ENCODE measurements at regions of chr14 and their contacts with region 1.

Region 1: DNA sequence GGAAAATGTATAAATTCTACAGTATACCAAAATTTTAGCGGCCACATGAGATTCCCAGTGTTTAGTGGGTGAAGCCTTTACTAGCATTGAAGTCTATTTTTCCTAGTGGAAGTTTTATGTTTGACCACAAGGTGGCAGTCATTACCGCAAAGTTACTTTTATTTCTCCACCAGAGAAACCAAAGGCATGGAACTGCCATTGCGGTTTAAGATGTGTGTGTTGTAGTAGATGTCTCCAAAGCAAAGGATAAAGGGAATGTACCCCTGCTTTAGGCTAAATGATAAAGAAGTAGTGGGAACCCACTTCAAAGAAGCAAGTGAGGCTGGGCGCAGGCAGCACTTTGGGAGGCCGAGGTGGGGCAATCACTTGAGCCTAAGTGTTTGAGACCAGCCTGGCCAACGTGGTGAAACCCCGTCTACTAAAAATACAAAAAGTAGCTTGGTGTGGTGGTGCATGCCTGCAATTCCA is 140.5 kb downstream of the PRKCH start:
- DNase-seq: no peak
- ATAC-seq: peak; percentile 66 to 78
- H3K4me3 ChIP-seq: no peak overlapping the region
- H3K27ac ChIP-seq: no peak overlapping the region
- H3K4me1 ChIP-seq: peaks cover 0 to 2% of the 10 kb centered on the region in 2 donors
- H3K27me3 ChIP-seq: no peaks in the 10 kb centered on the region
- CTCF ChIP-seq: peak; percentile 72 to 82 (median 76)
- POLR2A ChIP-seq: no peak

Region 2: GRCh38 chr14:61296719-61297502 is 164.9 kb before region 1 on chr14:
- in situ Hi-C with region 1: loop called in 2 of 4 experiments (anchors 10 kb)
- intact Hi-C with region 1: loop called (anchors 2 kb)
- DNase-seq: no peak
- ATAC-seq: peak; percentile 62
- H3K4me3 ChIP-seq: no peak overlapping the region
- H3K27ac ChIP-seq: no peak overlapping the region
- H3K4me1 ChIP-seq: peaks cover 11 to 13% of the 10 kb centered on the region in 2 donors
- H3K27me3 ChIP-seq: no peaks in the 10 kb centered on the region
- CTCF ChIP-seq: peak; percentile 23 to 67 (median 55)
- POLR2A ChIP-seq: no peak

Region 3: DNA sequence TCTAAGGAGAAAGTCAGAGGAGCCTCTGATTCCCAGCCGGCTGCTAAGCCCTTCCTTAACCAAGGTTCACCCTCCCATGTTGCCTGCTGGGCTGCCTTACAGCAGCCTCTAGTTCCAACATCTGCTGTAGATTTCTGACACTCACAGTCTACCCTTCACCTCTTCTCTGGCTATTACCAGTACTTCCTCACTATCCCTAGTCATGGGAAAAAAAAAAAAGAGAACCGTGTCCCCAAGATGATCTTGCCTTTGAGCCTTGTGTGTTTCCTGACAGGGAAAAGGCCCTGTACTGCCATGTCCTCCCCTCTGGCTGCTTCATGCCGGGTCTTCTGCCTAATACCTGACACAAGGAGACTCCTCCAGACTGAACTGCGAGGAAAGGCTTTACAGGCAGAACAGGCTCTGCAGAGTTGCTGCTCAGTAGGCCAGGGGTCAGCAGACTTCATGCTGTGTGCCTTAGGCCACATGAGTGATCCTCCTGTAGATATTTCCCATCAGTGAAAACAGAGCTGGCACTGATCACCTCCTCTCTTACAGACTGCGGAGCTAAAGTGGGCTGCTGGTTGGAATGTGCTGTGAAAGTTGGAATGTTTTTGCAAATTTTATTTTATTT is 93.6 kb before region 1 on chr14:
- in situ Hi-C with region 1: no loop called
- intact Hi-C with region 1: no loop called
- DNase-seq: no peak
- ATAC-seq: no peak
- H3K4me3 ChIP-seq: no peak overlapping the region
- H3K27ac ChIP-seq: peak overlapping the region in 1 of 4 donors; percentile 2
- H3K4me1 ChIP-seq: peaks cover 18 to 20% of the 10 kb centered on the region in 2 donors
- H3K27me3 ChIP-seq: no peaks in the 10 kb centered on the region
- CTCF ChIP-seq: no peak
- POLR2A ChIP-seq: no peak

Region 4: GRCh38 chr14:61508526-61508925 is 46.7 kb after region 1 on chr14:
- in situ Hi-C with region 1: no loop called
- intact Hi-C with region 1: loop called (anchors 1 kb)
- DNase-seq: no peak
- ATAC-seq: no peak
- H3K4me3 ChIP-seq: no peak overlapping the region
- H3K27ac ChIP-seq: no peak overlapping the region
- H3K4me1 ChIP-seq: peaks cover 0 to 5% of the 10 kb centered on the region in 2 donors
- H3K27me3 ChIP-seq: no peaks in the 10 kb centered on the region
- CTCF ChIP-seq: no peak
- POLR2A ChIP-seq: no peak

Region 5: DNA sequence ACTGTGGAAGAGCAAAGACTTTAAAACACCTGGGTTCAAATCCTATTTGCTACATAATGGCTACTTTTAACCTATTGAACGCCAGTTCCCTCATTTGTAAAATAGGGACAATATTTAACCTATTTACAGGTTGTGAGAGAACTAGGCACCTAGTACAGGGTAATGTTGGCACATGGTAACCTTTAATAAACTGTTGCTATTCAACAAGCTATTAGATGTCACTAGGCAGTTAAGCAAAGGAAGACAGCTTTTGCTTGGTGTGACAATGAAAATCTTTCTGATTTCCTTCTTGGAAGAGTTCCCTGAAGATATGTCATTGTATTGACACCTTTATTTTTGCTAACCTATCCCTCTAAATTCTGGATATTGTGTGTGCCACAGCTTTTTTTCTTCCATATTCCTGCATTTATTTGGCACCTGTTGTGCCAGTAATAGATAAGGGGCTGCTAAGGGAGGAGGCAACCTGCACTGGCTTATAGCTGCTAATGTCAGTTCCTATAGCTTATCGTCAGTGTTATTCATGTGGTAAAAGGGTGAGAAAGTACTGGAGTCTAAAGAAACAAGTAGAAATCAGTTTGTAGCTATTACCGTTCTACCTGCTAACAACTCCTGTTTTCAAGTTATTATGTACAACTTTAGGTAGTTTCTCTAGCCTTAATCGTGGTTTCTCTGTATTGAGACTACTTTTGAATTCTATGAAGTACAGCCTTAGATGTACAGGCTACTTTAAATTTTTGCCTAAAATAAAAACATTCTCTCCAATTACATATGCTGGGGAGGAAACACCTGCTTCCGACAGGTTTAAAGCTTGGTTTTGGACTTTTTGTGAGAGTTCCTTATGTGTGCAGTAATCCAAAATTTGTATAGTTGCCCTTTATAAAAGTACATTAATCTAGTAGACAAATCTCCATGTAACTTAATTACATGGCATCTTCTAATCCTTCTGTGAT is 257.8 kb after region 1 on chr14:
- in situ Hi-C with region 1: loop called in 1 of 4 experiments (anchors 10 kb)
- intact Hi-C with region 1: no loop called
- DNase-seq: no peak
- ATAC-seq: peak; percentile 23 to 49
- H3K4me3 ChIP-seq: no peak overlapping the region
- H3K27ac ChIP-seq: no peak overlapping the region
- H3K4me1 ChIP-seq: peaks cover 16 to 35% of the 10 kb centered on the region in 2 donors
- H3K27me3 ChIP-seq: no peaks in the 10 kb centered on the region
- CTCF ChIP-seq: no peak
- POLR2A ChIP-seq: no peak

Region 6: GRCh38 chr14:61730756-61731373 is 269.0 kb after region 1 on chr14:
- in situ Hi-C with region 1: loop called in 3 of 4 experiments (anchors 10 to 25 kb)
- intact Hi-C with region 1: loop called (anchors 2 kb)
- DNase-seq: no peak
- ATAC-seq: no peak
- H3K4me3 ChIP-seq: no peak overlapping the region
- H3K27ac ChIP-seq: no peak overlapping the region
- H3K4me1 ChIP-seq: no peaks in the 10 kb centered on the region
- H3K27me3 ChIP-seq: no peaks in the 10 kb centered on the region
- CTCF ChIP-seq: peak in 4 of 5 experiments; percentile 20 to 49 (median 40)
- POLR2A ChIP-seq: no peak

Region 7: GRCh38 chr14:61837336-61838229 is 375.7 kb after region 1 on chr14:
- in situ Hi-C with region 1: loop called (anchors 5 to 10 kb)
- intact Hi-C with region 1: loop called (anchors 1 kb)
- DNase-seq: peak; percentile 48 to 56
- ATAC-seq: peak; percentile 81 to 97
- H3K4me3 ChIP-seq: no peak overlapping the region
- H3K27ac ChIP-seq: no peak overlapping the region
- H3K4me1 ChIP-seq: no peaks in the 10 kb centered on the region
- H3K27me3 ChIP-seq: no peaks in the 10 kb centered on the region
- CTCF ChIP-seq: peak; percentile 78 to 94 (median 86)
- POLR2A ChIP-seq: no peak

Region 8: GRCh38 chr14:62126879-62127478 is 665.1 kb after region 1 on chr14:
- in situ Hi-C with region 1: loop called in 2 of 4 experiments (anchors 10 to 25 kb)
- intact Hi-C with region 1: loop called (anchors 5 kb)
- DNase-seq: no peak
- ATAC-seq: peak in 1 of 2 donors; percentile 49
- H3K4me3 ChIP-seq: no peak overlapping the region
- H3K27ac ChIP-seq: no peak overlapping the region
- H3K4me1 ChIP-seq: no peaks in the 10 kb centered on the region
- H3K27me3 ChIP-seq: peaks cover 0 to 4% (median 4%) of the 10 kb centered on the region in 3 donors
- CTCF ChIP-seq: peak in 4 of 5 experiments; percentile 12 to 54 (median 37)
- POLR2A ChIP-seq: no peak

Measured in gastrocnemius medialis (tissue), 4 donors.